ENCODE measurements at regions of chr6 and their contacts with region 1.

Region 1: DNA sequence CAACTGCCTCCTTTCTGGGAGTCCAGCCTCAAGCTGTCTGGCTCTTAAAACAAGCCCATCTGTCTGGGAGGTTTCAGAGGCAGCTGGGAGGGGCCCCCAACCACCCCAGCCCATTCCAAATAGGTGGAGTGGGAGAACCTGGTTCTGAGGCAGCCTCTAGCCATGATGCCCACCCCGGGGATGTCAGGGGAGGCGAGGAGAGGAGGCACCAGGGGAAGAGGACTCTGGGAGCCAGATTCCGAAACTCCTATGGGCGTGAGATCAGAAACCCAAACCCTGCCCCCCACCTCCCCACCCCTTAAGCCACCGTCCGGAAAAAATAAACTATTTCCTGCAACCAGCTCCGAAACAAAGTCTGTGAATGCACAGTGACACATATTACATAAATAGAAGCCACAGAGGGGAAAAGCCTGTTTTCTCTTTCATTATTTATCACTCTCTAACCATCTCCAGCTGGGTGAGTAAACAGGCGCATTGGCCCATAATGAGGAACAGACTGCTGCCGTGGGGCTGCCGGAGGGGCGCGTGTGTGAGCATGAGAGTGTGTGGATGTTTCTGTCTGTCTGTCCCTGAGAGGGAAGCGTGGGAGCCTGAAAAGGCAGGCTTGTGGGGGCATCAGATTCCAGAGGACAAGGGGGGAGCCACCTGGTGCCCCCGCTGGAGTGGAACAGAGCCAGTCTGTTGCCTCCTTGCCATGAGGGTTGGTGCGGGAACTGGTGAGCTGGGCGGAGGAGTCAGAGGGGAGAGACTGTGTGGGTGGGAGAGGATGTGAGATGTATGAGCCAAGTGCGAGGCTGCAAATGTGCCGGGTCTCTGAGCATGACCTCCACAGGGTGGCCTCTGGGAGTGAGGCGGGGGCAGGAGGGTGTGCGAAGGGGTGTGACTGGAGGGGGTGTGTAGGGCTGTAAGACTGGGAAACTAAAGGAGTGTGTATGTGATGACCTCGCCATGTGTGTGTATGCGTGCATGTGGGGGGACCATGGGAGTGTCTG is 14.3 kb upstream of the FOXP4 start:
- DNase-seq: peak; percentile 45
- H3K4me3 Mint-ChIP-seq: peak overlapping the region; percentile 53
- H3K27ac Mint-ChIP-seq: peak overlapping the region; percentile 70
- H3K4me1 Mint-ChIP-seq: peaks cover 16% of the 10 kb centered on the region
- H3K27me3 Mint-ChIP-seq: peaks cover 73% of the 10 kb centered on the region

Region 2: DNA sequence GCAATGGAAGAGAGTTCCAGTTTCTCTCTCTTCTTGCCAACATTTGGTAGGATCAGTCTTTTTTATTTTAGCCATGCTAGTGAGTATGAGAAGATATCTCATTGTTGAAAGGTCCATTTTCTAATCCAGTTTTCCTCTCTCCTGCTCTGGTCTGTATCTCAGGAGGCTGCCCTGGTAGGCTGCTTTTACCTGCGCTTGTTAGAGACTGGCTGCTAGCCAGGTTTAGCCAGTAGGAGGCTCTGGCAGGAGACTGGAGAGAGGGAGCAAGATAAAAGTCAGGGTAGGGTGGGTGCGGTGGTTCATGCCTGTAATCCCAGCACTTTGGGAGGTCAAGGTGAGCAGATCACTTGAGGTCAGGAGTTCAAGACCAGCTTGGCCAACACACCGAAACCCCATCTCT is 54.3 kb before region 1 on chr6:
- intact Hi-C with region 1: no loop called
- DNase-seq: no peak
- H3K4me3 Mint-ChIP-seq: no peak overlapping the region
- H3K27ac Mint-ChIP-seq: no peak overlapping the region
- H3K4me1 Mint-ChIP-seq: no peaks in the 10 kb centered on the region
- H3K27me3 Mint-ChIP-seq: peaks cover 32% of the 10 kb centered on the region

Region 3: GRCh38 chr6:41545703-41546474 is 14.0 kb after region 1 on chr6 and contains the start of gene FOXP4:
- intact Hi-C with region 1: loop called (anchors 1 kb)
- DNase-seq: peak; percentile 77
- H3K4me3 Mint-ChIP-seq: peak within 1 kb of the TSS; percentile 86
- H3K27ac Mint-ChIP-seq: peak within 1 kb of the TSS; percentile 50
- H3K4me1 Mint-ChIP-seq: peaks cover 22% of the 10 kb centered on the region
- H3K27me3 Mint-ChIP-seq: peaks cover 72% of the 10 kb centered on the region
- total RNA-seq, gene FOXP4: 9.6 and 9.7 TPM in 2 replicates

Region 4: GRCh38 chr6:41591859-41592502 is 60.1 kb after region 1 on chr6:
- intact Hi-C with region 1: no loop called
- DNase-seq: peak; percentile 65
- H3K4me3 Mint-ChIP-seq: no peak overlapping the region
- H3K27ac Mint-ChIP-seq: no peak overlapping the region
- H3K4me1 Mint-ChIP-seq: peaks cover 1% of the 10 kb centered on the region
- H3K27me3 Mint-ChIP-seq: no peaks in the 10 kb centered on the region

Region 5: DNA sequence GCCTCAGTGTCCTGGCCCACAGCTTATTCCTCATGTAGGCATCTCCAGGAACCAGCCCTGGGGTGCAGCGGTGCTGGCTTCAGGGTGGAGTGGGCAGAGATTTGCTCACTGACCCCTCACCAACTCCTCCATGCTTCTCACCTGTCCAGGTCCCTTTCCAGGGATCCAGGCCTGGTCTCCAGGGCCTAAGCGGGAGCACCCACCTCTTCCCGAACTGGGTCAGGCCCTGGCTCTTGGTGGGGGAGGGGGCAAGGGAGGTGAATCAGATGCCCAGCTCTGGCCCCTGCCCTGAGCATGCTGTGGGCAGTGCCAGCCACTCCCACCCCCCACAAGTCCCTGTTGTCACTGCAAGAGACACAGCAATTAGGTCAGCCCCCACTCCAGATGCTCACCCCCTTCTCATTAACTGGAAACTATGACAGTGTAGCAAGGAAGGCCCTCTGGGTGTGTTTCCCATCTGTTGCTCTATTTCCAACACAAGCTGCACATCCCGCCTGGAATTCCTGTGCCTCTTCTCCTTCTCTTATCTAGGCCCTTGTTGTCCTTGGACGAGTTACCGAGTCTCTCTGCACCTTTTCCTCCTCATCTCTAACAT is 143.4 kb after region 1 on chr6:
- intact Hi-C with region 1: no loop called
- DNase-seq: no peak
- H3K4me3 Mint-ChIP-seq: no peak overlapping the region
- H3K27ac Mint-ChIP-seq: no peak overlapping the region
- H3K4me1 Mint-ChIP-seq: no peaks in the 10 kb centered on the region
- H3K27me3 Mint-ChIP-seq: peaks cover 13% of the 10 kb centered on the region

Region 6: DNA sequence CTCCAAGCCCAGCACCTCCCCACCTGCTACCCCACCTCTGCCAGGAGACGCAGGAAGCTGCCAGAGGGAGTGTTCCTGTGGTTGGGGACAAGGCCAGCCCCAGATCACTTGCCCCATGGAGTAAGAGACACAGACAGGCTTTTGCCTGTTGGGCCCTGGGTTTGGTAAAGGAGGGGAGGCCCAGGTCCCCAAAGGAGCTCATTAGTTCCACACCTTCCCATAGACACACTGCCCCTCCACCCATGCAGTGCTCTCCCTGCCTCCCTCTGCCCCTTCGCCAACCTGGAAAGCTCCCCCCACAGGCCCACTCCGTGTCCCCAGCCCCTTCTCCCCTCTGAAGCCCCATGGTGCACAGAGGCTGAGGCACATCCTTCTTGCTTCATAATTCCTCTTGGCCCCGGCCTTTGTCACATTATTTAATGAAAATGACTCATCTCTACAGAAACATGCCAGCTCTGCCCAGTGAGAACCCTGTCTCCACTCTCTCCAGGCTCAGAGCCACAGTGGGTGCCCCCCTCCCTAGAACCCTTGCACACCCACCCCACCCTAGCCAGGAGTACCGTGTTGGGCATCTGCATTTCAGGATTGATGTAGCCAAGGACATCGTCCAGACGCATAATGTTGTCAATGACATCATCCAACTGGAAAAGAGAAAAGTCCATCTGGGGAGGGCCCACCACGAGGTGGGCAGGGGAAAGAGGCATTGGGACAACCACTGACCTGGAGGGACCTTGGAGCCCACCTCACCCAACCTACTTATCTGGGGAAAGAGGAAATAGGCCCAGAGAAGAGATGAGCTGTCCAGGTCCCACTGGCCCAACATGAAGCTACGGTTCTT is 157.5 kb after region 1 on chr6:
- intact Hi-C with region 1: no loop called
- DNase-seq: no peak
- H3K4me3 Mint-ChIP-seq: no peak overlapping the region
- H3K27ac Mint-ChIP-seq: no peak overlapping the region
- H3K4me1 Mint-ChIP-seq: no peaks in the 10 kb centered on the region
- H3K27me3 Mint-ChIP-seq: no peaks in the 10 kb centered on the region